PC-3 (cell line): ENCODE measurements at regions of chr15 and their contacts with region 1.

Region 1: GRCh38 chr15:59680346-59680745 is 8.8 kb downstream of the BNIP2 start:
- DNase-seq: no peak
- ATAC-seq: no peak
- H3K4me3 ChIP-seq: no peak overlapping the region
- H3K27ac ChIP-seq: no peak overlapping the region
- H3K4me1 ChIP-seq: no peaks in the 10 kb centered on the region
- H3K27me3 ChIP-seq: no peaks in the 10 kb centered on the region
- CTCF ChIP-seq: no peak

Region 2: DNA sequence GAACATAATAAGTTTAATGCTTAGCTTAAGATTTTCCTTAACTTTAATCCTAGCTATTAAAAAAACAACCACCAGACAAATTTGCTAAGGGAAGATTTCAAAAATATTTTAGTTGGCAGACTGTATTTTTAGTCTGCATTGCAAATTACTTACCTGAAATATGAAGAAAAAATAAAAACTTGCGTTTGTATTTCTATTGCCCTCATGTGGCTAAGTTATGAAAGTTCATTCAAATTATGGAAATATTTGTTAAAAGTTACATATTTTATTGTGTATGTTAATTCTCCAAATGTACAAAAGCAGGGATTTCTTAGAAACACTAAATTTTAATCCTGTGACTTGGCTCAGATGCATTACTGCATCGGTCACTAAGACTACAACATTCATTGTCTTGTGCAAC is 38.0 kb before region 1 on chr15:
- CTCF ChIA-PET with region 1: interaction called, 11 read pairs
- POLR2A ChIA-PET with region 1: no interaction called
- intact Hi-C with region 1: no loop called
- DNase-seq: no peak
- ATAC-seq: no peak
- H3K4me3 ChIP-seq: no peak overlapping the region
- H3K27ac ChIP-seq: no peak overlapping the region
- H3K4me1 ChIP-seq: no peaks in the 10 kb centered on the region
- H3K27me3 ChIP-seq: no peaks in the 10 kb centered on the region
- CTCF ChIP-seq: peak; percentile 47; the same call in 1 of the 2 replicates